ENCODE measurements at regions of chr17 and their contacts with region 1.

Region 1: GRCh38 chr17:57106107-57106835 is 21.2 kb downstream of the AKAP1 start:
- DNase-seq: peak in 1 of 4 experiments; percentile 30
- ATAC-seq: peak; percentile 61
- H3K4me3 ChIP-seq: no peak overlapping the region
- H3K27ac ChIP-seq: no peak overlapping the region
- H3K4me1 ChIP-seq: peaks cover 31 to 34% of the 10 kb centered on the region in 2 experiments
- H3K27me3 ChIP-seq: no peaks in the 10 kb centered on the region
- CTCF ChIP-seq: peak; percentile 44 to 56 (median 54)
- EP300 ChIP-seq: no peak
- POLR2A ChIP-seq: no peak
- RAD21 ChIP-seq: peak in 1 of 2 experiments; percentile 36; a peak in 1 of 4 replicates

Region 2: GRCh38 chr17:55872374-55872773 is 1233.9 kb before region 1 on chr17:
- CTCF ChIA-PET with region 1: no interaction called
- POLR2A ChIA-PET with region 1: no interaction called
- in situ Hi-C with region 1: no loop called
- intact Hi-C with region 1: no loop called
- DNase-seq: no peak
- ATAC-seq: no peak
- H3K4me3 ChIP-seq: no peak overlapping the region
- H3K27ac ChIP-seq: no peak overlapping the region
- H3K4me1 ChIP-seq: no peaks in the 10 kb centered on the region
- H3K27me3 ChIP-seq: no peaks in the 10 kb centered on the region; a peak in 1 of 5 replicates
- CTCF ChIP-seq: no peak
- EP300 ChIP-seq: no peak
- POLR2A ChIP-seq: no peak
- RAD21 ChIP-seq: no peak

Region 3: DNA sequence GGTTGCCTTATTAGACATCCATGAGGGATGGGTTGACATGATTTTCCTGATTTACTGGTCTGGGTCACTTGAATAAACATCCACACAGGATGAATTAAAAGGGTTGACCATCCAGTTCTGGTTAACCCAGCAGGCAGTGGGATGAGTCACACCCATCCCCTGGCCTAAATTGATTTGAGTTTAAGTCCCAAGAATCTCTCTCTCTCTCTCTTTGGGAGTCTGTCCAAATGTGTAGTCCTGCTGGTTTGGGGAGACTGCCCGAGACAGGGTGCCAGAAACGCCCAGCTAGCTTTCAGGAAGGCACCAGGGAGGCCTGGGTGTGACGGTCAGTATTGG is 89.6 kb before region 1 on chr17:
- CTCF ChIA-PET with region 1: no interaction called
- POLR2A ChIA-PET with region 1: no interaction called
- in situ Hi-C with region 1: loop called (anchors 5 kb)
- intact Hi-C with region 1: no loop called
- DNase-seq: no peak
- ATAC-seq: no peak
- H3K4me3 ChIP-seq: no peak overlapping the region
- H3K27ac ChIP-seq: no peak overlapping the region
- H3K4me1 ChIP-seq: peaks cover 6 to 19% of the 10 kb centered on the region in 2 experiments; a peak in 3 of 5 replicates
- H3K27me3 ChIP-seq: peaks cover 0 to under 1% of the 10 kb centered on the region in 2 experiments; a peak in 1 of 5 replicates
- CTCF ChIP-seq: no peak
- EP300 ChIP-seq: no peak
- POLR2A ChIP-seq: no peak
- RAD21 ChIP-seq: no peak